ENCODE measurements at regions of chr22 and their contacts with region 1.

Region 1: GRCh38 chr22:41800348-41801146 is at the start of gene CCDC134:
- DNase-seq: peak; percentile 88
- ATAC-seq: peak; percentile 98
- H3K4me3 Mint-ChIP-seq: peak within 1 kb of the TSS; percentile 98
- H3K27ac Mint-ChIP-seq: peak within 1 kb of the TSS; percentile 97
- H3K4me1 Mint-ChIP-seq: peaks cover 34% of the 10 kb centered on the region
- H3K27me3 Mint-ChIP-seq: no peaks in the 10 kb centered on the region
- CTCF ChIP-seq: no peak
- total RNA-seq, gene CCDC134: 9.2 and 13.2 TPM in 2 replicates

Region 2: GRCh38 chr22:41381329-41382097 is 419.0 kb before region 1 on chr22 and contains the start of gene TEF:
- CTCF ChIA-PET with region 1: no interaction called
- POLR2A ChIA-PET with region 1: interaction called, 12 read pairs
- intact Hi-C with region 1: no loop called
- DNase-seq: peak; percentile 95
- ATAC-seq: peak; percentile 84
- H3K4me3 Mint-ChIP-seq: peak within 1 kb of the TSS; percentile 91
- H3K27ac Mint-ChIP-seq: peak within 1 kb of the TSS; percentile 98
- H3K4me1 Mint-ChIP-seq: peaks cover 24% of the 10 kb centered on the region
- H3K27me3 Mint-ChIP-seq: no peaks in the 10 kb centered on the region
- CTCF ChIP-seq: no peak
- total RNA-seq, gene TEF: 5.1 and 5.2 TPM in 2 replicates

Region 3: GRCh38 chr22:41688365-41689211 is 112.0 kb before region 1 on chr22 and contains the start of gene SNU13:
- CTCF ChIA-PET with region 1: no interaction called
- POLR2A ChIA-PET with region 1: interaction called, 14 read pairs
- intact Hi-C with region 1: no loop called
- DNase-seq: peak; percentile 88
- ATAC-seq: peak; percentile 94
- H3K4me3 Mint-ChIP-seq: peak within 1 kb of the TSS; percentile 97
- H3K27ac Mint-ChIP-seq: peak within 1 kb of the TSS; percentile 96
- H3K4me1 Mint-ChIP-seq: peaks cover 28% of the 10 kb centered on the region
- H3K27me3 Mint-ChIP-seq: no peaks in the 10 kb centered on the region
- CTCF ChIP-seq: no peak
- total RNA-seq, gene SNU13: 157 and 165 TPM in 2 replicates

Region 4: GRCh38 chr22:41780746-41781505 is 19.6 kb before region 1 on chr22:
- CTCF ChIA-PET with region 1: interaction called, 5 read pairs
- POLR2A ChIA-PET with region 1: interaction called, 175 read pairs
- intact Hi-C with region 1: loop called (anchors 1 kb)
- DNase-seq: peak; percentile 60
- ATAC-seq: peak; percentile 96
- H3K4me3 Mint-ChIP-seq: peak overlapping the region; percentile 86
- H3K27ac Mint-ChIP-seq: peak overlapping the region; percentile 93
- H3K4me1 Mint-ChIP-seq: peaks cover 40% of the 10 kb centered on the region
- H3K27me3 Mint-ChIP-seq: no peaks in the 10 kb centered on the region
- CTCF ChIP-seq: no peak

Region 5: GRCh38 chr22:41816181-41816621 is 15.7 kb after region 1 on chr22:
- CTCF ChIA-PET with region 1: no interaction called
- POLR2A ChIA-PET with region 1: interaction called, 12 read pairs
- intact Hi-C with region 1: no loop called
- DNase-seq: no peak
- ATAC-seq: no peak
- H3K4me3 Mint-ChIP-seq: no peak overlapping the region
- H3K27ac Mint-ChIP-seq: no peak overlapping the region
- H3K4me1 Mint-ChIP-seq: no peaks in the 10 kb centered on the region
- H3K27me3 Mint-ChIP-seq: no peaks in the 10 kb centered on the region
- CTCF ChIP-seq: no peak

Region 6: GRCh38 chr22:41919357-41920224 is 119.0 kb after region 1 on chr22:
- CTCF ChIA-PET with region 1: no interaction called
- POLR2A ChIA-PET with region 1: interaction called, 11 read pairs
- intact Hi-C with region 1: no loop called
- DNase-seq: peak; percentile 82
- ATAC-seq: peak; percentile 53
- H3K4me3 Mint-ChIP-seq: peak overlapping the region; percentile 82
- H3K27ac Mint-ChIP-seq: peak overlapping the region; percentile 94
- H3K4me1 Mint-ChIP-seq: peaks cover 88% of the 10 kb centered on the region
- H3K27me3 Mint-ChIP-seq: no peaks in the 10 kb centered on the region
- CTCF ChIP-seq: no peak

Region 7: DNA sequence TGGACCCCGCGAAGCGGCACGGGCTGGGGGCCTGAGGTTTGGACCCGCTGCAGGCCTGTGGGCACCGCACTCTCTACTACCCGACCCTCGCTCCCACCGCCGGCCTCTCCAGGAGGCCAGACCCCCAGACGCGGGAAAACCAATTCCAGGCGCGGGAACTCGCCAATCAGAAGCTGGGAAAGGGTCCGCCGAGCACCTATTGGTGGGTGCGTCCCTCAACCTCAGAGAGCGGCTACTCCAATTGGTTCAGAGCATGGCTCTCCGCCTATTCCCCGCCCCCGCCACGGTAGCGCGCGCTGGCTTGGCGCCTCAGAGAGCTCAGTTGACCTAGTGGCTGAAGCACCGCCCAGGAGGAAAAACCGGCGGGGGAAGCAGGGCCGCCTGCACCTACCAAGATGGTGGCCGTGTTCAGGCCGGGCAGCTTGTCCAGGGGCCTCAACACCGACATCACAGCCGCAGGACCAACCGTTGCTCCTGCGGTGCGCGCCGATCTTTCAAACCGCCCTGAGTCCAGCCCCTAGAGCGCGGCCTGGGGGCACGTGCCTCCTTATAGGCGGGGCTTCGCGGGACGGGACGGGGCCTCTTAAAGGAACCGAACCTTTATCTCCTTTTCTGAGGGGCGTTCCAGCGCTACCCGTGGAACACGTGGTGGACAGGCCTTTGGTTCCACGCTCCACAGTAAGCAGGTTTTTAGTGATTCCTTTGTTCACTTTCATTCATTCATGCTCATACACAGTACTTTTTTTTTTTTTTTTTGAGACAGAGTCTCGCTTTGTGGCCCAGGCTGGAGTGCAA is 146.3 kb after region 1 on chr22 and contains the start of gene CENPM:
- CTCF ChIA-PET with region 1: no interaction called
- POLR2A ChIA-PET with region 1: interaction called, 11 read pairs
- intact Hi-C with region 1: no loop called
- DNase-seq: peak; percentile 84
- ATAC-seq: peak; percentile 91
- H3K4me3 Mint-ChIP-seq: peak within 1 kb of the TSS; percentile 91
- H3K27ac Mint-ChIP-seq: peak within 1 kb of the TSS; percentile 80
- H3K4me1 Mint-ChIP-seq: peaks cover 52% of the 10 kb centered on the region
- H3K27me3 Mint-ChIP-seq: no peaks in the 10 kb centered on the region
- CTCF ChIP-seq: no peak
- total RNA-seq, gene CENPM: 9.6 and 13.3 TPM in 2 replicates

Measured in activated B cell treated with CpG ODN at 0.5 μM for 24 hours (primary cell).